ENCODE measurements at regions of chr7 and their contacts with region 1.

Region 1: DNA sequence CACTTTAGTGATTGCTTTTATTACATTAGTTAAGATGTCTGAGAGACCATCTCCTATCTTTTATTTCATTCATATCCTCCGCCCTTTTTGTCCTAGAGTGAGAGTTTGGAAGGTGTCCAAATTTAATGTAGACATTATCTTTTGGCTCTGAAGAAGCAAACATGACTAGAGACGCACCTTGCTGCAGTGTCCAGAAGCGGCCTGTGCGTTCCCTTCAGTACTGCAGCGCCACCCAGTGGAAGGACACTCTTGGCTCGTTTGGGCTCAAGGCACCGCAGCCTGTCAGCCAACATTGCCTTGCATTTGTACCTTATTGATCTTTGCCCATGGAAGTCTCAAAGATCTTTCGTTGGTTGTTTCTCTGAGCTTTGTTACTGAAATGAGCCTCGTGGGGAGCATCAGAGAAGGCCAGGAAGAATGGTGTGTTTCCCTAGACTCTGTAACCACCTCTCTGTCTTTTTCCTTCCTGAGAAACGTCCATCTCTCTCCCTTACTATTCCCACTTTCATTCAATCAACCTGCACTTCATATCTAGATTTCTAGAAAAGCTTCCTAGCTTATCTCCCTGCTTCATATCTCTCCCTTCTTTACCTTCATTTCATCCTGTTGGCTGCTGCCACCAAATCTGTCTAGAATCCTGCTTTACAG is 10.4 kb upstream of the CLCN1 start:
- DNase-seq: peak in 1 of 2 experiments; percentile 88
- H3K4me3 ChIP-seq: no peak overlapping the region
- H3K27ac ChIP-seq: no peak overlapping the region
- H3K4me1 ChIP-seq: no peaks in the 10 kb centered on the region
- H3K27me3 ChIP-seq: no peaks in the 10 kb centered on the region
- CTCF ChIP-seq: peak; percentile 91 to 99 (median 96)
- EP300 ChIP-seq: no peak
- POLR2A ChIP-seq: no peak
- RAD21 ChIP-seq: peak; percentile 73 to 82

Region 2: GRCh38 chr7:143126140-143126539 is 179.4 kb before region 1 on chr7:
- CTCF ChIA-PET with region 1: no interaction called
- POLR2A ChIA-PET with region 1: no interaction called
- DNase-seq: no peak
- H3K4me3 ChIP-seq: no peak overlapping the region
- H3K27ac ChIP-seq: no peak overlapping the region
- H3K4me1 ChIP-seq: no peaks in the 10 kb centered on the region
- H3K27me3 ChIP-seq: no peaks in the 10 kb centered on the region; a peak in 1 of 7 replicates
- CTCF ChIP-seq: no peak
- EP300 ChIP-seq: no peak
- POLR2A ChIP-seq: no peak
- RAD21 ChIP-seq: no peak

Region 3: DNA sequence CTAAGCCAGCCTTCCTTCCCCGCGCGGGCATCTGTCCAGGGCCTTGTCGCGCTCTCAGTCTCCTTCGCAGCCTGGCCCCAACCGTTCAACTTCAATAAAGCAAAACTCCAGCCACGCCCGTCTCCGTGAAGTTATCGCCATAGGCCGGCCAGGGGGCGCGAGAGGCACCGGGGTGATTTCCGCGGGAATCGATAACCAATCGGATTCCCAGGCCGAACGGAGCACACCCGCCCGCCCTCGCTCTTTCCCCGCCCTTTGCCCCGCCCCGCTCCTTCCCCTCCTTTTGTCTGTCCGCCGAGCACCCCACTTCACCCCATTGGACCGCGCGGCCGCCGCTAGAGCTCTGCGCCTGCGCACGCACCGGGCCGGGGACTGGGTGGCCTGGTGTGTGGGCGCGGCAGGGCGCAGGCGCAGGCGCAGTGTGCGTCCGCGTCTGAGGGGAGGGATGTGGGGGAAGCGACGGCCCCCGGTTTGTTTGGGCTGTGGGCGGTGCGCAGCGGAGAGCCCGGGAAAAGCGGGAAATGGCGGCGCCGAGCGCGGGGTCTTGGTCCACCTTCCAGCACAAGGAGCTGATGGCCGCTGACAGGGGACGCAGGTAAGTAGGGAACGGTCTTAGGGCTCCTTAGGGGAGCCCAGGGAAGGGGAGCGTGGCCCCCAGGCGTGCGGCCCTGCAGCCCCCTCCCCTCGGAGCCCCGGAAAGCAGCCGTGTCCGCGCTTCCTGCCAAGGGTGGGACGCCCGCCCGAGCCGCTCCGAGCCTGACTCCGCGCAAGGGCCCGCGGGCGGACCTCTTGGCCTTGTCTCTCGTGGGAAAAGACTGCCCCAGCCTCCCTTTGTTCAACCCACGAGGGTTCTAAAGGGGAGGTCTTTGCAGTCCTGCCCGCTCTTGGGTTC is 17.4 kb before region 1 on chr7 and contains the start of gene CASP2:
- CTCF ChIA-PET with region 1: interaction called, 85 read pairs
- POLR2A ChIA-PET with region 1: interaction called, 7 read pairs
- DNase-seq: peak; percentile 94 to 98
- H3K4me3 ChIP-seq: peak within 1 kb of the TSS; percentile 81 to 96 (median 90)
- H3K27ac ChIP-seq: peak within 1 kb of the TSS; percentile 89
- H3K4me1 ChIP-seq: peaks cover 9 to 14% (median 10%) of the 10 kb centered on the region in 4 experiments
- H3K27me3 ChIP-seq: peaks cover 10 to 21% (median 20%) of the 10 kb centered on the region in 4 experiments
- CTCF ChIP-seq: peak in 2 of 3 experiments; percentile 17 to 21; a peak in 3 of 4 replicates
- EP300 ChIP-seq: no peak
- POLR2A ChIP-seq: peak; percentile 88 to 91
- RAD21 ChIP-seq: no peak
- total RNA-seq, gene CASP2: 32.8 and 35.3 TPM in 2 replicates

Region 4: GRCh38 chr7:143372070-143372469 is 66.5 kb after region 1 on chr7:
- CTCF ChIA-PET with region 1: interaction called, 14 read pairs
- POLR2A ChIA-PET with region 1: no interaction called
- DNase-seq: no peak
- H3K4me3 ChIP-seq: no peak overlapping the region
- H3K27ac ChIP-seq: no peak overlapping the region
- H3K4me1 ChIP-seq: peaks cover 6 to 22% (median 13%) of the 10 kb centered on the region in 4 experiments; a peak in 5 of 7 replicates
- H3K27me3 ChIP-seq: no peaks in the 10 kb centered on the region
- CTCF ChIP-seq: peak in 1 of 3 experiments; percentile 21; a peak in 1 of 4 replicates
- EP300 ChIP-seq: no peak
- POLR2A ChIP-seq: no peak
- RAD21 ChIP-seq: peak; percentile 14 to 28; a peak in 1 of 4 replicates

Region 5: DNA sequence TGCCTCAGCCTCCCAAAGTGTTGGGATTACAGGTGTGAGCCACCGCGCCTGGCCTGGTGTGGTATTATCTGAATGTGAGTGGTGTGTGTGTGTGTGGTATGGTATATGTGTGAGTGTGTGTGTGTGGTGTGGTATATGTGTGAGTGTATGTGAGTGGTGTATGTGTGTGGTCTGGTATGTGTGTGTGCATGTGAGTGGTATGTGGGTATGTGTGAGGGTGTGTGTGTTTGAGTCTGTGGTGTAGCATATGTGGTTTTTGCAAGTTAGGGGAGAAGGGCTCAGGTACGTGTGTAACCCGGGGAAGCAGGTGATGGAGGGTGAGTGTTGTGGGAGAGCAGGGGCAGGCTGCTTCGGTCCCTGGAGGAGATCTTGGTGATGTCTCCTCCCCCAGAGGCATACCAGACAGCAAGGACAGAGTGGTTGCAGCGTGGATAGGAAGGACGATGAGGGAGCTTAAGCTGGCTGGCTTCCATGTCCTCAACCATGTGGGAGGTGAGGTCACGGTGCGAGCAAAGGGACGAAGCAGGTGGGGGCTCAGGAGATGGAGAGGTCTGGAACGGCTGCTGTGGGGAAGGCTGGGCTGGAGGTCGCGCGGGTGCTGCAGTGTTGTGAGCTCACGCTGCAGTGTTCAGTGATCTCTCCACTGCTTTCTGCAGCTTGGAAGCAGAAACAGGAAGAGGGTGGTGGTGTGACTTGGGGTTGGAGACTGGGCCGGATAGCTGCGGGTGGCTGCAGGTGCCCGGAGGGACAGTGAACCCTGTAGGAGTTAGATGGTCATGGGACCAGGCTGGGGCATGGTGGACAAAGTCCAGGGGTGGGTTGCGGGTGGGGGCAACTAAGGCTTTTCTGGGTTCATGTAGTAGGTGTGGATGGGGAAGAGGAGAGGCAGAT is 80.6 kb after region 1 on chr7:
- CTCF ChIA-PET with region 1: interaction called, 12 read pairs
- POLR2A ChIA-PET with region 1: no interaction called
- DNase-seq: no peak
- H3K4me3 ChIP-seq: no peak overlapping the region
- H3K27ac ChIP-seq: peak overlapping the region; percentile 22; the same call in 1 of the 2 replicates
- H3K4me1 ChIP-seq: peaks cover 2 to 18% (median 4%) of the 10 kb centered on the region in 4 experiments; a peak in 6 of 7 replicates
- H3K27me3 ChIP-seq: no peaks in the 10 kb centered on the region
- CTCF ChIP-seq: no peak
- EP300 ChIP-seq: no peak
- POLR2A ChIP-seq: no peak; a peak in 1 of 3 replicates
- RAD21 ChIP-seq: no peak